ENCODE measurements at regions of chr1 and their contacts with region 1.

Region 1: DNA sequence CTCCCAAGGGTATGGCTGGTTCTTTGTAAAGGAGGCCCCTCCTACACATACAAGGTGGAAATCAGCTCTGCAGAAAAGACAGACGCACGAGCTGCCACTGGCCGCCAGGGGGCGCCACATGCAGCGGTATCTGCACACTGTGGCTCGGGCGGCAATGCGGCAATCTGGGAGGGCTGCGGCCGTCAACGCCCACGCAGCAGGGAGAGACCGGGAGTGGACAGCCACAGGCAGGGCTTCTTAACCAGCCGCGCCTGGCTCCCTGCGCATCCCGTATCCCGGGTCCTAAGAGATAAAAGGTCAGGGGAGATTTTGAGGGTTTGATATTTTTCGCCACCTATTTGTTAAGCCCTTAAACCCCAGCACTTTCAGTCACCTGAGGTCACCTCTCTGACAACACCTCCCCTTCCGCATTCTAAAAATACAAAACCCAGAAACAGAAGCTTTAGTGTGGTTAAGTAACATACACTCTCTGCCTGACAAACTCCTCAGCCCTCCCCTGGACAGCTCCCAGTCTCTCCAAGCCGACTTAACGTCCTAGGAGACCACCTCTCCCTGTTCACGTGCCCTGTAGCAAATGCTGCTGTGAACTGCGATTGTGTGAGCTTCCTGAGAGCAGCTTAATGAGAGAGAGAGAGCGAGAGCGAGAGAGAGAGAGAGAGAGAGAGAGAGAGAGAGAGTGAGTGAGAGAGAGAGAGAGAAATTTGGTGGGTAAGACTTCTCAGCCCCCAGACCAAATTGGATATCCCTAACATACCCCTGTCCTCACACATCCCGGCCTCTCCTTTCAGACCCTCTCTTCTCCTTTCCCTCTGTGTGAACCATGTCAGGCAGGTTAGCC is 13.5 kb upstream of the KCNA2 start:
- DNase-seq: peak; percentile 66 to 73
- H3K4me3 ChIP-seq: no peak overlapping the region
- H3K4me3 Mint-ChIP-seq: peak overlapping the region; percentile 52
- H3K27ac Mint-ChIP-seq: no peak overlapping the region
- H3K4me1 ChIP-seq: no peaks in the 10 kb centered on the region
- H3K4me1 Mint-ChIP-seq: no peaks in the 10 kb centered on the region
- H3K27me3 ChIP-seq: no peaks in the 10 kb centered on the region
- H3K27me3 Mint-ChIP-seq: peaks cover 26% of the 10 kb centered on the region
- CTCF ChIP-seq: peak; percentile 56 to 69

Region 2: DNA sequence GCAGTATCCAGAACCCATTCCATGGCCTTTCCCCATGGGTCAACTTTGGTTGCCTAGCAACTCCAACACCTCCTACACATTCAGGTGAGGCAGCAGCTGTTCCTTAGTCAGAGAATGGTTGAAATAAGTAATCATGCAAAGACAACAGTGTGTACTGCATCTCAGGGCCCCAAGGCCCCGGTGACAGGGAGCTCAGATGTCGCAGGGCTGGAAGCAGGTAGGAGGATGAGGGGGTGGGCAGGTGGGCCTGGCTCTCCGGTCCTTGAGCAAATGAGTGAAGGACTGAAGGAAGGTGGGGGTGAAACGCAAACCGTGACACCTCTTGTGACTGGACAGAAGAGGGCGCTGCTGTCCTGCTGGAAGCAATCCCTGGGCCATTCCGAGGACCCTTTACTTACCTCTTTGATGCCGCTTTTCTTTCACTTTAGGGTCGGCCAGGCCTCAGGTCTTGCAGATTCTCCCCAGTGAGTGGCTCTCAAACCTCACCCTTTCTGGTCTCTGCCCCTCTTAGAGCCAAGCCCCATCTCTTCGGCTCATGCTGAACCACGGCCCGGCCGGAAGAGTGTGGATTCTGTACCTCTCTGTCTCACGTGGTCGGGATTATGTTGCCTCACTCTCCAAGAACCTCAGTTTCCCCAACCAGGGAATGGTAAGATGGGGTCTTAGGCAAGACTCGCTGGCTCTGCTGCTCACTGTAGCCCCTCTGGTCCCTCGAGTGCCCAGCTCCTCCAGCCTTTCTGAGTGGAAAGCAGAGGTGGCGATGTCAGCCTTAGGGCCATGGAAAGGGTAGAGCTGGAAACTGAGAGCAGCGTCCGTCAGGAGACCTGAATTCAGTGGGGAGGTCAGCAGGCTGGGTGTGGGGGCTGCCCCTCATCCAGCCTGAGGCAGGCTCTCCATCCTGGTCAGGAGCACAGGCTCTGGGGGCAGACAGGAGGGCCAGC is 95.0 kb before region 1 on chr1:
- CTCF ChIA-PET with region 1: interaction called, 3 read pairs
- POLR2A ChIA-PET with region 1: no interaction called
- intact Hi-C with region 1: loop called (anchors 1 kb)
- DNase-seq: peak; percentile 42 to 44
- H3K4me3 ChIP-seq: no peak overlapping the region
- H3K4me3 Mint-ChIP-seq: no peak overlapping the region
- H3K27ac Mint-ChIP-seq: no peak overlapping the region
- H3K4me1 ChIP-seq: no peaks in the 10 kb centered on the region
- H3K4me1 Mint-ChIP-seq: no peaks in the 10 kb centered on the region
- H3K27me3 ChIP-seq: no peaks in the 10 kb centered on the region
- H3K27me3 Mint-ChIP-seq: peaks cover 9% of the 10 kb centered on the region
- CTCF ChIP-seq: peak; percentile 57 to 64

Region 3: GRCh38 chr1:110580244-110580643 is 39.4 kb before region 1 on chr1:
- CTCF ChIA-PET with region 1: no interaction called
- POLR2A ChIA-PET with region 1: no interaction called
- intact Hi-C with region 1: loop called (anchors 2 kb)
- DNase-seq: no peak
- H3K4me3 ChIP-seq: no peak overlapping the region
- H3K4me3 Mint-ChIP-seq: no peak overlapping the region
- H3K27ac Mint-ChIP-seq: no peak overlapping the region
- H3K4me1 ChIP-seq: no peaks in the 10 kb centered on the region
- H3K4me1 Mint-ChIP-seq: no peaks in the 10 kb centered on the region
- H3K27me3 ChIP-seq: no peaks in the 10 kb centered on the region
- H3K27me3 Mint-ChIP-seq: no peaks in the 10 kb centered on the region
- CTCF ChIP-seq: no peak

Region 4: GRCh38 chr1:110746579-110747160 is 127.0 kb after region 1 on chr1:
- CTCF ChIA-PET with region 1: no interaction called
- POLR2A ChIA-PET with region 1: no interaction called
- intact Hi-C with region 1: no loop called
- DNase-seq: peak; percentile 39 to 58
- H3K4me3 ChIP-seq: no peak overlapping the region
- H3K4me3 Mint-ChIP-seq: no peak overlapping the region
- H3K27ac Mint-ChIP-seq: no peak overlapping the region
- H3K4me1 ChIP-seq: no peaks in the 10 kb centered on the region
- H3K4me1 Mint-ChIP-seq: no peaks in the 10 kb centered on the region
- H3K27me3 ChIP-seq: no peaks in the 10 kb centered on the region
- H3K27me3 Mint-ChIP-seq: no peaks in the 10 kb centered on the region
- CTCF ChIP-seq: no peak

Region 5: DNA sequence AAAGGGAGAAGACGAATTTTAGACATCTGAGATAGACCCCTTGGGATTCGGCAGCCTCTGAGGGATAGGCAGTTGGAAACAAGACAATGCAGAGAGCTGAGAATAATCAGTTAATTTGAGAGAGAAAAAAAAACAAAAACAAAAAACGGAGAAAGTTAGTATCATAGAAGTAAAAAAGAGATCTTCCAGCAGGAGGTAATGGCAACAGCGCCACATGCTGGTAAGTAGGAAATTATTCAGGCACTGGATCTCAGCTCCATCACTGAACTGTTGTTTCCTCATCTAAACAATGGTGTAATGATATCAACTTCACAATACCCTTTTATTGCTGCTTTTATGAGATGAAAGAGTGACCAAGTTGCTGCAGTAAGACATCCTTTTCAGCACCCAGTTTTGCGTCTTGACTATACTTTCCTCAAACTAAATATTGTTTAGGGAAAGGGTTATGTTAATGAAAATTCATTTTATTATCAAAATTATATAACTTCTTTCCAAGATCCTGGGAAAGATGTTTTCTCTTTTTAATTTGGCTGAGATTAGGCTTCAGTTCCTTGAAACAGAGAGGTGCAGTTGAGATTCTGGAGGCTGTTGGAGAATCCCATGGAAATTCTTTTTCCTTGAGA is 146.5 kb after region 1 on chr1:
- CTCF ChIA-PET with region 1: interaction called, 6 read pairs
- POLR2A ChIA-PET with region 1: no interaction called
- intact Hi-C with region 1: loop called (anchors 1 kb)
- DNase-seq: no peak
- H3K4me3 ChIP-seq: no peak overlapping the region
- H3K4me3 Mint-ChIP-seq: no peak overlapping the region
- H3K27ac Mint-ChIP-seq: no peak overlapping the region
- H3K4me1 ChIP-seq: no peaks in the 10 kb centered on the region
- H3K4me1 Mint-ChIP-seq: no peaks in the 10 kb centered on the region
- H3K27me3 ChIP-seq: no peaks in the 10 kb centered on the region
- H3K27me3 Mint-ChIP-seq: peaks cover 9% of the 10 kb centered on the region
- CTCF ChIP-seq: peak; percentile 54 to 59

Region 6: DNA sequence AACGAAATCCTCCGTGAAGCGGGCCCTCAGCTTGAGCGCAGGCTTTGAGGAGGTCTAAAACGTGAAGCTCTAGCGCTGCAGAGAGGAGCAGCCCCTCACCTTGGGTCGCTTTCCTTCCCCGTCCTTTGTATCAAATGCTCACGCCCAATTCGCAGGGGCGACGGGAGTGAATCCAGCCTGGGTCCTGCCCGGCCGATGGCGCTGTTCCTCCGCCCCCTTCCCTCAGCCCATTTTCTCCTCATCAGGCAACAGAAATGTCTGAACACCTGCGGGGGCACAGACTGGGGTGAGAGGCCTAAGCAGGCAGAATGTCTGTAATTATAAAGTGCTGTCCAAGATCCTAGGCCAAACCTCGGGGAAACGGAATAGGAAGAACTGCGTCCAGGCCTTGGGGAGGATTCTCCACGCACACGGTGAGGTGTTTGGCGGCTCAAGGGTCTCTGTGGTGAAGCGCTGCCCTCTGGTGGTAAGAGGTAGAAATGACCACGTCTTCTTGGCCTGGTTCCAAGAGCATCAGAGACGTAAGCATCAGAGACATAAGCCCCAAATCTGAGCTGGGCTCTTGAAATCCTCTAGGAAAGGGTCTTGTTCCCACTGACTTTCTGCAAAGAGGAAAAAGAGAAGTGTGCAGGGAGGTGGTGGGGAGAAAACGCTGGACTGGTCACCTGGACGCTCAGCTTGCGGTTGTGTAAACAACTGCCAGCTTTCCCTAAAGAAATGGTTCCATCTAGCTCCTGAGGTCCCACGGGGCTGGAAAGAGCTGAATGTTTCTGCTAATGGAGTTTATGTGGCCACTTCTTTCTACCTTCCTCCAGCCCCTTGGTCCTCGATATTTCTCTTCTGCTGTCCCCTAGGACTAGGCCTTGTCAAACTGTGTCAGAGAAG is 161.2 kb after region 1 on chr1:
- CTCF ChIA-PET with region 1: interaction called, 5 read pairs
- POLR2A ChIA-PET with region 1: no interaction called
- intact Hi-C with region 1: loop called (anchors 5 kb)
- DNase-seq: peak; percentile 43 to 46
- H3K4me3 ChIP-seq: no peak overlapping the region
- H3K4me3 Mint-ChIP-seq: no peak overlapping the region
- H3K27ac Mint-ChIP-seq: no peak overlapping the region
- H3K4me1 ChIP-seq: no peaks in the 10 kb centered on the region
- H3K4me1 Mint-ChIP-seq: no peaks in the 10 kb centered on the region
- H3K27me3 ChIP-seq: no peaks in the 10 kb centered on the region
- H3K27me3 Mint-ChIP-seq: peaks cover 12% of the 10 kb centered on the region
- CTCF ChIP-seq: peak; percentile 43 to 52

Region 7: DNA sequence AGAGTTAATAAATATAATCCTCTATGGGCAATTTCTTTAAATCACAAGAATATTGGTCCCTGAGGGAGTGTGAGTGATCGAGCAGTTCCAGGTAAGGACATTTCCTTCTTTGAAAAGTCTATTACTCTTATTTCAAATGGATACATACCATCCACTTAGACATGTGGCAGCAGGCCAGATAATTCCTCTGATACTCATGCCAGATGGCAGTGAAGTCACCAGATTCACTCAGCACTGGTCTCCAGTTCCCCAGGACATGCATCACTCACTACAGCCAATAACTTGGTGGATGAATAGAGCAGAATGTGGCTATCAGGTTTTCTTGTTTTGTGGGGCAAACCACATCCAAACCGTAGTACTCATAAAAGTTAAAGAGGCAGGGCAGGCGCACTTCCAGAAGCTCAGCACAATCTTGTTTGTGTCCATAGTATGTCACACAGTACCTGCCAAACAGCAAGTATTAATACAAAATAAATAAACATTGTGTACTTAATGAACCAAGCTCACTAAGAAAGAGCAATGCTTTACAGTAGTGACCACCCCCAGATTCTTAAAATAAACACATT is 179.1 kb after region 1 on chr1:
- CTCF ChIA-PET with region 1: no interaction called
- POLR2A ChIA-PET with region 1: no interaction called
- intact Hi-C with region 1: no loop called
- DNase-seq: no peak
- H3K4me3 ChIP-seq: no peak overlapping the region
- H3K4me3 Mint-ChIP-seq: no peak overlapping the region
- H3K27ac Mint-ChIP-seq: no peak overlapping the region
- H3K4me1 ChIP-seq: no peaks in the 10 kb centered on the region
- H3K4me1 Mint-ChIP-seq: no peaks in the 10 kb centered on the region
- H3K27me3 ChIP-seq: no peaks in the 10 kb centered on the region
- H3K27me3 Mint-ChIP-seq: no peaks in the 10 kb centered on the region
- CTCF ChIP-seq: no peak